ENCODE measurements at regions of chr4 and their contacts with region 1.

Region 1: DNA sequence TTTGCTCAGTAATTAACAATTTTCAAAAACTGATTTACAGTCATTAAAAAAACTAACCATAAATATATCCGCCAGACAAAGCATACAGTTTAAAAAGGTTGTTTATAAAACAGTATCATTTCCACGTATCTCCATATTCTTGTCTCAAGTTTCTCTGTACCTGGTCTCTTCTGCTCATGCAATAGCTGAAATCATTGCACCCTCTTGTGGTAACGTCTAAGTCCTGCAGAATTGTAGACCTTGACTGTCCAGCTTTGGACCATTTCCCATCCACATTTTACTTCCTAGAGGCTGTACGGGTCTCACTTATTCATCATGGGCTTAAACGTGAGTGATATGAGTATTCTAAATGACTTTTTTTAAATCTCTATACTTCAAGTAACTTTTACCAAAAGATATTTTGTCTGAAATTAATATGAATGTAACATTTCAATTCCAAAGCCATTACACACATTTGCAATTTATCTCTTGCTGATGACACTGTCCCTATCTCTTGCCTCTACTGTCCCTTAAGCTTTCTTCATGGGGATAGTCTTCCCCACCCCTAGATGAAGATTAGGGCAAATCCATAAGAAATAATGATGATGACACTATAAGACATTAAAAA is 118.5 kb downstream of the BTC start:
- DNase-seq: peak; percentile 16
- H3K4me3 ChIP-seq: no peak overlapping the region
- CTCF ChIP-seq: peak; percentile 79

Region 2: DNA sequence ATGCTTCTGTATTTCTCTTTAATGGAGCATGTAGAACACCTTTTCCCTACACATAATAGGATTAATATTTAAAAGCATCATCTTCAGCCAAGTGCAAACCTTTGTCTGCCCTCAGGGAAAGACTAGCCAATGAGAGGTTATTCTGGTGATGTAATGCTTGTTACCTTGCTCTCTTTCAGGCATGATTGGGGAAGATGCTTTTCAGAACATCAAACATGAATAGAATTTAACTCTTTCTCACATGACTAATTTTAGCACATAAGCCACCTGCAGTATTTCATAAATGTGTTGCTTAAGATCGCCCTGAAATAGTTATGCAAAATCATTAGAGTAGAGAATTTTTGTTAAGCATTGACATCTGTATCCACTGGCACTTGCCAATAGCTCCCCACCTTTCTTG is 378.2 kb before region 1 on chr4:
- CTCF ChIA-PET with region 1: no interaction called
- POLR2A ChIA-PET with region 1: no interaction called
- DNase-seq: no peak
- H3K4me3 ChIP-seq: no peak overlapping the region
- CTCF ChIP-seq: no peak

Region 3: DNA sequence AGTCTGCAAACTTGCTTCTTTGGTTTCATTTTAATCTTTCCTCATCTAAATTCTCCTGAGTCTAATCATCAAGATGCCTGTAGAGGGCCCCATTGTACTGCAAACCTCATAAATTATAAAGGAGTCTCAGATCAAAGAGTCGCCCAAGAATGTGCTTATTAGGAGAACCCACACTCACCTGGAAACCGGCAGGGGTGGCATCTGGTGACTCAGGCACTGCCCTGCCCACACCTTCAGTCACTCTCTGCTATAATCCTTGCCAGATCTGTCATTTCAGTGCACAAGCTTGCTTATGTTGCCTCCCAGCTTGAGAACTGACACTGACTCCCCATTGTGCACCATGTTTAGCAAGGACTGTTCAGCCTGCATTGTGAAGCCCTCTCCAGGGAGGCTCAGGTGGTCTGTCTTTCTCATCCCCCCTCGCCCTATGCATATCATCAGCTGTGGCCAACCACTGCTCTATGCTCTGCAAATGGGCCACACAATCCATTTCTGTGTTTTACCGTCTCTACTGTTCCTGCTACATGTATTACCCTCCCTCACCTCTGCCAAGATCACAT is 355.1 kb before region 1 on chr4:
- CTCF ChIA-PET with region 1: interaction called, 404 read pairs
- POLR2A ChIA-PET with region 1: no interaction called
- DNase-seq: no peak
- H3K4me3 ChIP-seq: no peak overlapping the region; the same call in 1 of the 2 replicates
- CTCF ChIP-seq: peak; percentile 19

Region 4: GRCh38 chr4:74364652-74365491 is 310.9 kb before region 1 on chr4 and contains the start of gene EREG:
- CTCF ChIA-PET with region 1: interaction called, 131 read pairs
- POLR2A ChIA-PET with region 1: no interaction called
- DNase-seq: peak; percentile 7
- H3K4me3 ChIP-seq: peak within 1 kb of the TSS; percentile 55
- CTCF ChIP-seq: no peak

Region 5: DNA sequence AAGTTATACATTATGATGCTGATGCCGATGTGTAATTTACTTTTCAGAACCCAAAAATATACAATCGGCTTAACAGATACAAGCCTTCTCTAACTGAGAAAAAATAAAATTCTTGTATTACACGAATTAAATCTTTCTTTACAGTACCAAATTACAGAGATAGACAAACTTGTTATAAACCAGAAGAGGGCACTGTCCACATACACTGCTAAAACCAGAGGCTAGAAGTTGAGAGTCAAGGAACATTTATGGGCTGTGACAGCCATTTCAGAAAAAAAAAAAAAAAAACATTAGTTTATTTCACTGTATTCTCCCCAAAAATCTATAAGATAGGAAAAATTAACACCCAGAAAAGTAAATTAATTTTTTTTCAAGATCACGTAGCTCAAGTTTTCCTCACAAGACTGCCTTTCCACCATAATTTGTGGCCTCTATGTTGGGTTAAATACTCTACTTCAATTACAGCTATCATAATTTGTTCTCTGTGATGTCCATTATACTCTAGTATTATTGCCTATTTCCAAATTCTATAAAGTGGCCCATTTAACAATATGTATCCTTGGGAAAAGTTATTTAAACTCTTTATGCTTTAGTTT is 298.8 kb before region 1 on chr4:
- CTCF ChIA-PET with region 1: interaction called, 142 read pairs
- POLR2A ChIA-PET with region 1: no interaction called
- DNase-seq: no peak
- H3K4me3 ChIP-seq: no peak overlapping the region
- CTCF ChIP-seq: peak; percentile 38

Region 6: GRCh38 chr4:74537459-74537858 is 138.3 kb before region 1 on chr4:
- CTCF ChIA-PET with region 1: interaction called, 109 read pairs
- POLR2A ChIA-PET with region 1: no interaction called
- DNase-seq: no peak
- H3K4me3 ChIP-seq: no peak overlapping the region
- CTCF ChIP-seq: no peak

Region 7: GRCh38 chr4:74551745-74552144 is 124.0 kb before region 1 on chr4:
- CTCF ChIA-PET with region 1: no interaction called
- POLR2A ChIA-PET with region 1: no interaction called
- DNase-seq: no peak
- H3K4me3 ChIP-seq: no peak overlapping the region
- CTCF ChIP-seq: no peak

Region 8: GRCh38 chr4:74640111-74640903 is 35.5 kb before region 1 on chr4:
- CTCF ChIA-PET with region 1: interaction called, 10 read pairs
- POLR2A ChIA-PET with region 1: no interaction called
- DNase-seq: no peak
- H3K4me3 ChIP-seq: no peak overlapping the region
- CTCF ChIP-seq: no peak

Region 9: DNA sequence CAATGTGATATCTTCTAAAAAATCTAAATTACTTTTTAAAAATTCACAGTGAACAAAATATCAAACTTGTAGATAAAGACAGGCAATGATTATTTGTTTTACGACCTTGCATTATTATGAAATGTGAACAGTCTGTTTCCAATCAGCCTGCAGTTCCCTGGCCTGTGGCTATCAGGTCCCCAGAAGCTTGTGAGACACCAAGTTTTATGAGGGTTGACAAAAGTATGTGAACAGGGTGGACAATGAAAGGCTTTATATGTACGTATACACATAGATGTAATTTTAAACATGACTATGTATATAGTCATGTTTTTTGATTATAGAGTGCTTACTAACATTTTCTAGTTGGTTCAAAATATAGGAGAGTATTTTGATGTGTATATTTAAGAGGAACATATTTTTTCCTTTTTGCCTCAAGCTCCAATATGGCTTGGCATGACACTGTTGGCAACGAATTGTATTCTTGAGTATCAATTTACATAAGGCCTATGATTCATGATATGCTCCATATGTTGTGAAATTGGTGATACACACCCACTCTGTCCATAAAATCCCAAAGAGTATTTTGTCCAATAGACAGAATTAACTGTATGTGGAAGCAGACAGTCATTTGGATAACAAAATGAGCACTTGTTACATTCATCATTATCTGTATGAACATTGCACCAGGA is 62.8 kb after region 1 on chr4:
- CTCF ChIA-PET with region 1: no interaction called
- POLR2A ChIA-PET with region 1: no interaction called
- DNase-seq: no peak
- H3K4me3 ChIP-seq: no peak overlapping the region
- CTCF ChIP-seq: no peak

Measured in AG04449 (cell line).